Mammary epithelial cell (primary cell): ENCODE measurements at regions of chr19 and their contacts with region 1.

Region 1: DNA sequence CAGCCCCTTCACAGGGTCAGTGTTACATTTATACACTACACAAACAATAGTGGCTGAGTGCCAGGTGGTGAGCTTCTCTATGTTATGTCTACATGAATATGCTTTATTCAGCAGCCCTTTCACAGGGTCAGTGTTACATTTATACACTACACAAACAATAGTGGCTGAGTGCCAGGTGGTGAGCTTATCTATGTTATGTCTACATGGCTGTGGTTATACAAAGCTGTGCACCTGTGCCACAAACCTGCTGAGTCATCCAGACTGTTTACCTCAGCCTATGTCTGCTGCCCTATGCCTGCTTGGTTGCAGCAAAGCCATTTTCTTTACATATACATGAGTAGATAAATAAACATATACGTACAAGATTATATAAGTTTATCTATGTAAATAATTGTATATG is 76.5 kb downstream of the ZNF726 start:
- DNase-seq: peak; percentile 87
- H3K4me3 ChIP-seq: no peak overlapping the region
- H3K27ac ChIP-seq: no peak overlapping the region
- H3K4me1 ChIP-seq: no peaks in the 10 kb centered on the region
- H3K27me3 ChIP-seq: no peaks in the 10 kb centered on the region
- CTCF ChIP-seq: no peak

Region 2: DNA sequence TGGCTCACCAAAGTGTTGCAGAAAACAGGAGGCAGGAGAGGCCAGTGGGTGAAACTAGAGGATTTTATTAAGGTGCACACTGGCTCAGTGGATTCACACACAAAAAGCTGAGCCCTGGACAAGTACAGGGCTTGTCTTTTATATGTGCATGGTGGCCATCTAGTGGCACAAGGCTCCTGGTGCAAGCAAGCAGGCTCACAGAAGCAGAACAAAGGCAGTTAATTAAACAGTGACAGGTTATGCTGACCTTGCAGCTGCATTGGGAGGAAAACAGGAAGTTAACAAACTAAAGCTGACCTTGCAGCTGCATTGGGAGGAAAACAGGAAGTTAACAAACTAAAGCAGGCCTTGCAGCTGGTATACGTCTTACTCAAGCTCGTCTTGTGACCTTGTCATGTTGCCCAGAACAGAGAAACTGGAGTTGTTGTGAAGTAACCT is 167.2 kb before region 1 on chr19:
- CTCF ChIA-PET with region 1: no interaction called
- dilution Hi-C with region 1: no loop called
- in situ Hi-C with region 1: no loop called
- intact Hi-C with region 1: no loop called
- DNase-seq: peak; percentile 30
- H3K4me3 ChIP-seq: no peak overlapping the region
- H3K27ac ChIP-seq: no peak overlapping the region
- H3K4me1 ChIP-seq: no peaks in the 10 kb centered on the region
- H3K27me3 ChIP-seq: no peaks in the 10 kb centered on the region
- CTCF ChIP-seq: no peak

Region 3: GRCh38 chr19:23957660-23958281 is 33.4 kb before region 1 on chr19:
- CTCF ChIA-PET with region 1: no interaction called
- dilution Hi-C with region 1: loop called (anchors 5 kb)
- in situ Hi-C with region 1: no loop called
- intact Hi-C with region 1: no loop called
- DNase-seq: peak; percentile 88
- H3K4me3 ChIP-seq: no peak overlapping the region
- H3K27ac ChIP-seq: no peak overlapping the region
- H3K4me1 ChIP-seq: no peaks in the 10 kb centered on the region
- H3K27me3 ChIP-seq: no peaks in the 10 kb centered on the region
- CTCF ChIP-seq: no peak

Region 4: GRCh38 chr19:24074720-24075454 is 83.7 kb after region 1 on chr19:
- CTCF ChIA-PET with region 1: no interaction called
- dilution Hi-C with region 1: no loop called
- in situ Hi-C with region 1: no loop called
- intact Hi-C with region 1: no loop called
- DNase-seq: peak; percentile 57
- H3K4me3 ChIP-seq: no peak overlapping the region
- H3K27ac ChIP-seq: no peak overlapping the region
- H3K4me1 ChIP-seq: peaks cover 21% of the 10 kb centered on the region
- H3K27me3 ChIP-seq: no peaks in the 10 kb centered on the region
- CTCF ChIP-seq: no peak